ENCODE measurements at regions of chr2 and their contacts with region 1.

Region 1: GRCh38 chr2:201860636-201861066 is 54.3 kb downstream of the CDK15 start:
- DNase-seq: peak; percentile 65 to 71
- ATAC-seq: peak; percentile 97 to 98
- H3K4me3 ChIP-seq: no peak overlapping the region
- H3K27ac ChIP-seq: no peak overlapping the region
- H3K4me1 ChIP-seq: no peaks in the 10 kb centered on the region
- CTCF ChIP-seq: peak; percentile 91
- EP300 ChIP-seq: no peak
- POLR2A ChIP-seq: no peak
- RAD21 ChIP-seq: peak; percentile 92 to 94

Region 2: DNA sequence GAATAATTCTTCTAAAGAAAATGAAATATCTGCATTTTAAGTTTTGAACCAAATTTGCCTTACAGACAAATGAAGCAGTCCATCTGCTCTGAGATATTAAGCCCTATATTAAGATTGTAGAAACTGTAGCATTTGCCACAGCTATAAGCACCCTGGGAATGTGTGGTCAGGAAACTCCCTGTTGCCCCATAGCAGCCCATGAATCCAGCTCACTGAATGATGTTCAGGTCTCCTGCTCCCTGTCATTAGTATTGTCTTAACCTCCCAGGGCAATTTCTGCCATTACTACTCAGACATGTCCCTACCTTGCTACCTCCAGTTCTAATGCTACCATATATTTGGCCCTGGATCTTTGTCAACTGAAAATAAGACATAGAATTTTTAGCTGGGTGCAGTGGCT is 13.2 kb before region 1 on chr2:
- CTCF ChIA-PET with region 1: interaction called, 18 read pairs
- POLR2A ChIA-PET with region 1: no interaction called
- DNase-seq: no peak
- ATAC-seq: no peak
- H3K4me3 ChIP-seq: no peak overlapping the region
- H3K27ac ChIP-seq: no peak overlapping the region
- H3K4me1 ChIP-seq: peaks cover 1% of the 10 kb centered on the region; the same call in 2 of the 3 replicates
- CTCF ChIP-seq: no peak
- EP300 ChIP-seq: no peak
- POLR2A ChIP-seq: no peak
- RAD21 ChIP-seq: no peak

Region 3: DNA sequence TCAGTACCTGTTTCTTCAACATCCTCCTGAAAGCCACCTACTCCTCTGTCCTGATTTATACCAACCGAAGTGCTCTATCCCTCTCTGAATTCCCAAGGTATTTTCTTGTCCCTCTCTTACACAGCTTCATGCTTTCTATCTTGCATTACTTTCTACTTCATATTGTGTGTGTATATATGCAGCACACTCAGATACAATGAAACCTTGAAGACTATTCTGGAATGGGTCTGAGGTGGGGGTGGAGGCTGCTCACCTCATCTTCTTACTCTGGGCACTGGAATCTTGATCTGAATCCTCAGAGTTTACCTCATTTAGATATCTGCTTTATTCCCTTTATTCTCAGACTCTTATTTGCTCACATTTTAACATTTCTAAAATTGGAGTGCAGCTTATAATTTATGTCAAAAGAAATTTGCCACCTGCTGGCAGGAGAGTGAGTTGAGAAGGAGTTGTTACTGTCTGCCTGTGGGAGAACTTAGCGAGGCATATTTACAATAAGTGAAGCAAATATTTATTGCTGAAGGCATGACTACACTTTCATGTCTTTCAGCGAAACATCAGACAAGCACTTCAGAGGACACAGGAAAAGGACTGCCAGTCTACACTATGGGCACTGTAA is 195.8 kb after region 1 on chr2:
- CTCF ChIA-PET with region 1: interaction called, 20 read pairs
- POLR2A ChIA-PET with region 1: no interaction called
- DNase-seq: peak in 1 of 2 experiments; percentile 33
- ATAC-seq: peak; percentile 70 to 79; a peak in 5 of 6 replicates
- H3K4me3 ChIP-seq: no peak overlapping the region
- H3K27ac ChIP-seq: no peak overlapping the region
- H3K4me1 ChIP-seq: no peaks in the 10 kb centered on the region
- CTCF ChIP-seq: peak; percentile 40
- EP300 ChIP-seq: no peak
- POLR2A ChIP-seq: no peak
- RAD21 ChIP-seq: peak; percentile 33 to 36; a peak in 4 of 5 replicates

Region 4: DNA sequence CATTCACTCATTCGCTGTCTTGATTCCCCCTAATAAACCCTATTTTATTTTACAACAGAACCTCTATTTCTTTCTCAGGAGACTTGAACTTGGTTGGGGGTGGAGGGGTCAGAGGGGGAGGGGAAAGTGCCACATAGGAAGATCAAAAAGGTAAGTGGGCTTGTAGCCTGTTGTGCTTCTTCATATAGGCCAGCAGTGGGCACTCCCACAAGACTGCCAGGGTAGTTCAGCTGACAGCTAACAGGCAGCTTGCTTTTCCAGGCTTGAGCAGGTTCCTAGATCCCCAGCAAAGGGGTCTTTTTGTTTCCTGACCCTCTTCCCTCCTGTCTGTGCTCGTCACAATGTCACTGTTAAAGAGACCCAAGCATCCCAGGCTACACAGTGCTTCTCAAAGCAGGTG is 211.6 kb after region 1 on chr2:
- CTCF ChIA-PET with region 1: interaction called, 12 read pairs
- POLR2A ChIA-PET with region 1: no interaction called
- DNase-seq: peak in 1 of 2 experiments; percentile 28
- ATAC-seq: peak; percentile 47 to 71; a peak in 4 of 6 replicates
- H3K4me3 ChIP-seq: no peak overlapping the region
- H3K27ac ChIP-seq: no peak overlapping the region
- H3K4me1 ChIP-seq: no peaks in the 10 kb centered on the region
- CTCF ChIP-seq: no peak; the same call in 1 of the 3 replicates
- EP300 ChIP-seq: no peak
- POLR2A ChIP-seq: no peak
- RAD21 ChIP-seq: no peak

Region 5: GRCh38 chr2:202171241-202171825 is 310.7 kb after region 1 on chr2:
- CTCF ChIA-PET with region 1: interaction called, 16 read pairs
- POLR2A ChIA-PET with region 1: no interaction called
- DNase-seq: no peak
- ATAC-seq: no peak; a peak in 1 of 6 replicates
- H3K4me3 ChIP-seq: no peak overlapping the region
- H3K27ac ChIP-seq: no peak overlapping the region
- H3K4me1 ChIP-seq: no peaks in the 10 kb centered on the region
- CTCF ChIP-seq: no peak
- EP300 ChIP-seq: no peak
- POLR2A ChIP-seq: no peak
- RAD21 ChIP-seq: no peak

Measured in A549 (cell line).